ENCODE measurements at regions of chr6 and their contacts with region 1.

Region 1: GRCh38 chr6:37698261-37699137 is 816 bp upstream of the MDGA1 start:
- DNase-seq: peak; percentile 61
- ATAC-seq: peak; percentile 22
- H3K4me3 Mint-ChIP-seq: peak overlapping the region; percentile 77
- H3K27ac Mint-ChIP-seq: no peak overlapping the region
- H3K4me1 Mint-ChIP-seq: peaks cover 21% of the 10 kb centered on the region
- H3K27me3 Mint-ChIP-seq: peaks cover 47% of the 10 kb centered on the region

Region 2: GRCh38 chr6:37791156-37791919 is 92.8 kb after region 1 on chr6:
- CTCF ChIA-PET with region 1: no interaction called
- POLR2A ChIA-PET with region 1: no interaction called
- intact Hi-C with region 1: loop called in 1 of 2 experiments (anchors 2 kb)
- DNase-seq: peak; percentile 94
- ATAC-seq: peak; percentile 100
- H3K4me3 Mint-ChIP-seq: no peak overlapping the region
- H3K27ac Mint-ChIP-seq: no peak overlapping the region
- H3K4me1 Mint-ChIP-seq: peaks cover 10% of the 10 kb centered on the region
- H3K27me3 Mint-ChIP-seq: no peaks in the 10 kb centered on the region

Region 3: GRCh38 chr6:38012573-38012972 is 314.1 kb after region 1 on chr6:
- CTCF ChIA-PET with region 1: no interaction called
- POLR2A ChIA-PET with region 1: no interaction called
- intact Hi-C with region 1: loop called in 1 of 2 experiments (anchors 2 kb)
- DNase-seq: peak; percentile 36
- ATAC-seq: peak; percentile 63
- H3K4me3 Mint-ChIP-seq: no peak overlapping the region
- H3K27ac Mint-ChIP-seq: no peak overlapping the region
- H3K4me1 Mint-ChIP-seq: peaks cover 14% of the 10 kb centered on the region
- H3K27me3 Mint-ChIP-seq: no peaks in the 10 kb centered on the region

Region 4: DNA sequence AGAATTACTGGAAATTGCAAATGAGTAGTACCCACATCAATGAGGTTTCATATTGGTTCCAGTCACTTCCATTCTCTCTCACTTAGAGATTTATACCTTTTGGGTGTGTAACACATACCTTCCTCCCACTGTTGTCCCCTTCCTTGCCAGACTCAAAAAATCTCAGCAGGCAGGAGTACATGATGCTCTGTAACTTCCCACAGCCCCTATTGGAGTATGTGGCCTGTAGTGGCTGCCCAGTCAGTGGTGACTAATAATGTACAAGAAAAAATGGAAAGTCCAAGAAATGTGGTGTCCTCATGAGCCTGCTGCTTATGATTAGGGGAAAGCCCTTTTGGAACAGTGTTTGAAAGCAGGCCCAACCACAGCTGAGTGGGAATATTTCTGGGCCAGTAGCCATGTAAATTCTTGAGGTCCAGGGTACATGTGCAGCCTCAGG is 433.0 kb after region 1 on chr6:
- CTCF ChIA-PET with region 1: no interaction called
- POLR2A ChIA-PET with region 1: no interaction called
- intact Hi-C with region 1: loop called in 1 of 2 experiments (anchors 2 kb)
- DNase-seq: peak; percentile 26
- ATAC-seq: peak; percentile 91
- H3K4me3 Mint-ChIP-seq: no peak overlapping the region
- H3K27ac Mint-ChIP-seq: peak overlapping the region; percentile 87
- H3K4me1 Mint-ChIP-seq: peaks cover 56% of the 10 kb centered on the region
- H3K27me3 Mint-ChIP-seq: no peaks in the 10 kb centered on the region

Measured in activated CD4-positive, alpha-beta T cell treated with anti-CD3 and anti-CD28 coated beads for 36 hours (primary cell).